ENCODE measurements at regions of chr12 and their contacts with region 1.

Region 1: DNA sequence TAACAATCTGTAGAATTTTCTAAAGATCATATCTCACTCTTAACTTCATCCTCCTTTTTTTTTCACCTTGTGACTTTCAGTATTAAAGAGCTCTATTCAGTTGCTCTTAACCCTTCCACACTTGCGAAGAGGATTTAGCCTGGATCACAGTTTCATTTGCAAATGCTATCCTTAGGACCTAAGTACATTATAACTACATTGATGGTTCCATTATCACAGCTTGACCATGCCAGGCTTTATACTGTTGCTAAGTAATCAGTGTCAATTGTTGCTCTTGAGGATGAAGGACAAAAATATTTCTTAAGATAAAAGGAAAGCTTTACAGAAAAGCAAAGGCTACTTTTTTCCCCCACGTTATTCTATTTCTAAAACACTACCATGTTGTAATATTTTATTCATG is 122.2 kb downstream of the PDZRN4 start:
- DNase-seq: no peak
- ATAC-seq: no peak
- H3K4me3 ChIP-seq: no peak overlapping the region
- H3K27ac ChIP-seq: no peak overlapping the region
- H3K4me1 ChIP-seq: no peaks in the 10 kb centered on the region
- H3K27me3 ChIP-seq: no peaks in the 10 kb centered on the region
- CTCF ChIP-seq: no peak
- POLR2A ChIP-seq: no peak

Region 2: GRCh38 chr12:41367726-41368405 is 57.5 kb after region 1 on chr12:
- intact Hi-C with region 1: loop called in 1 of 10 experiments (anchors 10 kb)
- DNase-seq: no peak
- ATAC-seq: no peak
- H3K4me3 ChIP-seq: no peak overlapping the region
- H3K27ac ChIP-seq: no peak overlapping the region
- H3K4me1 ChIP-seq: no peaks in the 10 kb centered on the region
- H3K27me3 ChIP-seq: no peaks in the 10 kb centered on the region
- CTCF ChIP-seq: peak in 4 of 12 donors; percentile 6 to 12 (median 11)
- POLR2A ChIP-seq: no peak